Mammary epithelial cell (primary cell): ENCODE measurements at regions of chr7 and their contacts with region 1.

Region 1: GRCh38 chr7:99822731-99823718 is 4.8 kb upstream of the CYP3A43 start:
- DNase-seq: no peak
- H3K4me3 ChIP-seq: no peak overlapping the region
- H3K27ac ChIP-seq: no peak overlapping the region
- H3K4me1 ChIP-seq: peaks cover 5% of the 10 kb centered on the region
- H3K27me3 ChIP-seq: no peaks in the 10 kb centered on the region
- CTCF ChIP-seq: no peak

Region 2: GRCh38 chr7:99901581-99902200 is 78.7 kb after region 1 on chr7:
- CTCF ChIA-PET with region 1: no interaction called
- dilution Hi-C with region 1: loop called (anchors 5 kb)
- in situ Hi-C with region 1: no loop called
- intact Hi-C with region 1: no loop called
- DNase-seq: no peak
- H3K4me3 ChIP-seq: no peak overlapping the region
- H3K27ac ChIP-seq: no peak overlapping the region
- H3K4me1 ChIP-seq: no peaks in the 10 kb centered on the region
- H3K27me3 ChIP-seq: no peaks in the 10 kb centered on the region
- CTCF ChIP-seq: no peak